Endothelial cell of umbilical vein (primary cell): ENCODE measurements at regions of chr9 and their contacts with region 1.

Region 1: DNA sequence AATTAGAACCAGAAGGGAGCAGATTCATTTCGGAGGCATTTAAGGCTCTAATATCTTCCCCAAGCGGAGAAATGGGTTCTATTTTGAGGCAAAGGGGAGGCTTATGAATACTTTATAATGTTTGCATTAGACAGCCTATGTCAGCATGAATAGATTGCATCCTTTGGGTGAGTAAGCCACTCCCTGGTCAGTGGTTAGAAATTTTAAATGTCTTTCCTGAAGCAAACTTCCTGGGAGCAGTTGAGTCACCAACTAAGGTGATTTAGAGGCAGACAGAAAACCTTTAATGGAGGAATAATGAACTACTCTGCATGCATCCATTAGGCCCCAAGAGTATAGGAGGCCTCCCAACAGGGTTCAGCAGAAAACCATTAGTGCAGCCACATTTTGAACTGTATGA is 204.9 kb downstream of the ELAVL2 start:
- DNase-seq: no peak
- H3K4me3 ChIP-seq: no peak overlapping the region
- H3K27ac ChIP-seq: peak overlapping the region; percentile 90
- H3K4me1 ChIP-seq: peaks cover 21% of the 10 kb centered on the region
- H3K27me3 ChIP-seq: no peaks in the 10 kb centered on the region
- CTCF ChIP-seq: no peak
- POLR2A ChIP-seq: no peak

Region 2: GRCh38 chr9:23543419-23543818 is 77.8 kb before region 1 on chr9:
- CTCF ChIA-PET with region 1: no interaction called
- POLR2A ChIA-PET with region 1: no interaction called
- dilution Hi-C with region 1: no loop called
- intact Hi-C with region 1: no loop called
- DNase-seq: no peak
- H3K4me3 ChIP-seq: no peak overlapping the region
- H3K27ac ChIP-seq: no peak overlapping the region
- H3K4me1 ChIP-seq: no peaks in the 10 kb centered on the region
- H3K27me3 ChIP-seq: no peaks in the 10 kb centered on the region
- CTCF ChIP-seq: no peak
- POLR2A ChIP-seq: no peak

Region 3: GRCh38 chr9:23638837-23639426 is 17.7 kb after region 1 on chr9:
- CTCF ChIA-PET with region 1: no interaction called
- POLR2A ChIA-PET with region 1: no interaction called
- dilution Hi-C with region 1: no loop called
- intact Hi-C with region 1: no loop called
- DNase-seq: no peak
- H3K4me3 ChIP-seq: no peak overlapping the region
- H3K27ac ChIP-seq: no peak overlapping the region
- H3K4me1 ChIP-seq: no peaks in the 10 kb centered on the region
- H3K27me3 ChIP-seq: no peaks in the 10 kb centered on the region
- CTCF ChIP-seq: no peak
- POLR2A ChIP-seq: no peak

Region 4: GRCh38 chr9:23826120-23826629 is 205.0 kb after region 1 on chr9 and contains the start of gene ELAVL2:
- CTCF ChIA-PET with region 1: no interaction called
- POLR2A ChIA-PET with region 1: no interaction called
- dilution Hi-C with region 1: no loop called
- intact Hi-C with region 1: loop called (anchors 2 kb)
- DNase-seq: peak; percentile 78
- H3K4me3 ChIP-seq: peak within 1 kb of the TSS; percentile 29 to 77 (median 30)
- H3K27ac ChIP-seq: no peak within 1 kb of the TSS
- H3K4me1 ChIP-seq: peaks cover 6% of the 10 kb centered on the region
- H3K27me3 ChIP-seq: peaks cover 38 to 58% of the 10 kb centered on the region in 2 experiments
- CTCF ChIP-seq: no peak
- POLR2A ChIP-seq: no peak
- total RNA-seq, gene ELAVL2: 0.18 and 0.20 TPM in 2 replicates